OCI-LY7 (cell line): ENCODE measurements at regions of chr14 and their contacts with region 1.

Region 1: GRCh38 chr14:49633640-49634546 is 1.2 kb downstream of the DNAAF2 start:
- DNase-seq: peak; percentile 98
- H3K4me3 ChIP-seq: peak overlapping the region; percentile 78
- H3K27ac ChIP-seq: peak overlapping the region; percentile 93
- H3K4me1 ChIP-seq: peaks cover 31% of the 10 kb centered on the region
- CTCF ChIP-seq: peak; percentile 87

Region 2: GRCh38 chr14:49396801-49397200 is 237.1 kb before region 1 on chr14:
- CTCF ChIA-PET with region 1: no interaction called
- POLR2A ChIA-PET with region 1: no interaction called
- intact Hi-C with region 1: no loop called
- DNase-seq: no peak
- H3K4me3 ChIP-seq: no peak overlapping the region
- H3K27ac ChIP-seq: no peak overlapping the region
- H3K4me1 ChIP-seq: no peaks in the 10 kb centered on the region
- CTCF ChIP-seq: no peak

Region 3: GRCh38 chr14:49620182-49621113 is 13.4 kb before region 1 on chr14 and contains the starts of genes MGAT2 and RPL36AL:
- CTCF ChIA-PET with region 1: interaction called, 6 read pairs
- POLR2A ChIA-PET with region 1: interaction called, 62 read pairs
- intact Hi-C with region 1: loop called (anchors 2 kb)
- DNase-seq: peak; percentile 99
- H3K4me3 ChIP-seq: peak within 1 kb of the TSS; percentile 88
- H3K27ac ChIP-seq: peak within 1 kb of the TSS; percentile 85
- H3K4me1 ChIP-seq: peaks cover 51% of the 10 kb centered on the region
- CTCF ChIP-seq: peak; percentile 33
- total RNA-seq, gene MGAT2: 79.3 and 83.5 TPM in 2 replicates
- total RNA-seq, gene RPL36AL: 257 and 441 TPM in 2 replicates

Region 4: GRCh38 chr14:49767562-49768300 is 133.8 kb after region 1 on chr14 and contains the start of gene KLHDC2:
- CTCF ChIA-PET with region 1: interaction called, 4 read pairs
- POLR2A ChIA-PET with region 1: interaction called, 8 read pairs
- intact Hi-C with region 1: loop called (anchors 1 kb)
- DNase-seq: peak; percentile 93
- H3K4me3 ChIP-seq: peak within 1 kb of the TSS; percentile 73
- H3K27ac ChIP-seq: peak within 1 kb of the TSS; percentile 78
- H3K4me1 ChIP-seq: peaks cover 35% of the 10 kb centered on the region
- CTCF ChIP-seq: peak; percentile 75
- total RNA-seq, gene KLHDC2: 55.7 and 68.0 TPM in 2 replicates

Region 5: GRCh38 chr14:49852301-49853157 is 218.6 kb after region 1 on chr14 and contains the start of gene NEMF:
- CTCF ChIA-PET with region 1: interaction called, 4 read pairs
- POLR2A ChIA-PET with region 1: interaction called, 5 read pairs
- intact Hi-C with region 1: loop called (anchors 1 kb)
- DNase-seq: peak; percentile 93
- H3K4me3 ChIP-seq: peak within 1 kb of the TSS; percentile 93
- H3K27ac ChIP-seq: peak within 1 kb of the TSS; percentile 55
- H3K4me1 ChIP-seq: peaks cover 39% of the 10 kb centered on the region
- CTCF ChIP-seq: peak; percentile 99
- total RNA-seq, gene NEMF: 63.2 and 71.3 TPM in 2 replicates

Region 6: GRCh38 chr14:50231475-50232275 is 597.8 kb after region 1 on chr14 and contains the start of gene SOS2:
- CTCF ChIA-PET with region 1: no interaction called
- POLR2A ChIA-PET with region 1: no interaction called
- intact Hi-C with region 1: loop called (anchors 5 kb)
- DNase-seq: peak; percentile 91
- H3K4me3 ChIP-seq: peak within 1 kb of the TSS; percentile 94
- H3K27ac ChIP-seq: peak within 1 kb of the TSS; percentile 81
- H3K4me1 ChIP-seq: peaks cover 18% of the 10 kb centered on the region
- CTCF ChIP-seq: 0 out of 2 replicates have a peak, but pooled peaks have one; percentile 12
- total RNA-seq, gene SOS2: 13.5 and 16.5 TPM in 2 replicates

Region 7: GRCh38 chr14:50532502-50533240 is 898.8 kb after region 1 on chr14 and contains the start of gene MAP4K5:
- CTCF ChIA-PET with region 1: no interaction called
- POLR2A ChIA-PET with region 1: no interaction called
- intact Hi-C with region 1: loop called (anchors 1 kb)
- DNase-seq: peak; percentile 93
- H3K4me3 ChIP-seq: peak within 1 kb of the TSS; percentile 89
- H3K27ac ChIP-seq: peak within 1 kb of the TSS; percentile 71
- H3K4me1 ChIP-seq: peaks cover 27% of the 10 kb centered on the region
- CTCF ChIP-seq: peak; percentile 85
- total RNA-seq, gene MAP4K5: 44.0 and 49.8 TPM in 2 replicates